ENCODE measurements at regions of chr1 and their contacts with region 1.

Region 1: GRCh38 chr1:212749821-212750535 is 41.6 kb downstream of the NSL1 start:
- DNase-seq: peak; percentile 35
- CTCF ChIP-seq: peak; percentile 46

Region 2: GRCh38 chr1:212731630-212732029 is 18.3 kb before region 1 on chr1:
- CTCF ChIA-PET with region 1: interaction called, 17 read pairs
- POLR2A ChIA-PET with region 1: no interaction called
- DNase-seq: no peak
- CTCF ChIP-seq: no peak

Region 3: DNA sequence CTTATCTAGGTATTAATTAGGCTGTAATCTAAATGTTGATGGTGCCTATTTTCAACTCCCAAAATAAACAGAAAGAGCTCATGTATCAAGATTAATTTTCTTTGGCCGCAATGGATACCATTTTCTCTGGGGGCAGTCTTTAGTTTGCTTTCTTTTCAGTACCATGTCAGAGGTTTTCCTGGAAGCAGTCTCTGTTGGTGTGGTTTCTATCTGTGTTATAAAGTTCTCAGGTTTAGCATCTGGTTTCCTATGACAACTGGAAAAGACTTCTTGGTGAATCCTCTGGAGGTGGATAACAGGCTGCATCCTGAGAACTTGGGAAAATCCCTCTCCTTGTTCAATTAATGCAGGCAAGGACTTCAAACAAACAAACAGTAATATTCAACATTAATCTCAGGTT is 11.6 kb before region 1 on chr1:
- CTCF ChIA-PET with region 1: interaction called, 17 read pairs
- POLR2A ChIA-PET with region 1: no interaction called
- DNase-seq: no peak
- CTCF ChIP-seq: no peak

Region 4: DNA sequence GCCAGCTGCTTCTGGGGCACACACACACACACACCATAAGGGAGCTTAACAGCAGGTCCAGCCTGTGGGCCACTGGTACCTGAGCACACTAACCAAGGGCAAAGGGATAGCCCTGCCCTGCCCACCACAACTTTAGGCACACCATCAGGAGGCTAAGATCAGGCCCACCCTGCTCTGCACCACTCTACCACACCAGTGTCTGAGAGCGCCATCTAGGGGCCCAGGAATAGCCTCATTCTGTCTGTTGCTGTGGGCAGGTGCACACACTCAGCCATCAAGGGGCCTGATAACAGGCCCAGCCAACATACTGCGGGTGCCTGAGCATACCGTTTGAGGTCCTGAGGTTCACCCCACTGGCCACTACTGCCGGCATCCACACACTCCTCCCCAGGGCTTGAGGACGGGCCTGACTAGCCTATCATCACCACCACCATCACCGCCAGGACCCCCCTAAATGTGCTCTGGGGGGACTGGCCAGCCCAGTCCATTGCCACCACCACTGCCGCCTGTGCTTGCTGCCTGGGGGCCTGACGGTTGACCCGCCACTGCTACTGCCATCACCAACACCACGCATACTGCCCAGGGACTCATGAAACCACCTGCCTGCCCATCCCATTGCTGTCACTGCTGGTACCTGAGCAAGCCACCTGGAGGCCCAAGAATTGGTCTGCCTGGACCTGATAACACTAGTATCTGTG is 10.3 kb after region 1 on chr1:
- CTCF ChIA-PET with region 1: interaction called, 29 read pairs
- POLR2A ChIA-PET with region 1: no interaction called
- DNase-seq: peak; percentile 52
- CTCF ChIP-seq: peak; percentile 28

Region 5: GRCh38 chr1:212774584-212774983 is 24.6 kb after region 1 on chr1:
- CTCF ChIA-PET with region 1: interaction called, 16 read pairs
- POLR2A ChIA-PET with region 1: no interaction called
- DNase-seq: no peak
- CTCF ChIP-seq: no peak